Activated CD4-positive, alpha-beta T cell treated with anti-CD3 and anti-CD28 coated beads, Interleukin-2, amount 10 ng/mL, durations not matched to agents 24 days and 14 days (primary cell): ENCODE measurements at regions of chr7 and their contacts with region 1.

Region 1: DNA sequence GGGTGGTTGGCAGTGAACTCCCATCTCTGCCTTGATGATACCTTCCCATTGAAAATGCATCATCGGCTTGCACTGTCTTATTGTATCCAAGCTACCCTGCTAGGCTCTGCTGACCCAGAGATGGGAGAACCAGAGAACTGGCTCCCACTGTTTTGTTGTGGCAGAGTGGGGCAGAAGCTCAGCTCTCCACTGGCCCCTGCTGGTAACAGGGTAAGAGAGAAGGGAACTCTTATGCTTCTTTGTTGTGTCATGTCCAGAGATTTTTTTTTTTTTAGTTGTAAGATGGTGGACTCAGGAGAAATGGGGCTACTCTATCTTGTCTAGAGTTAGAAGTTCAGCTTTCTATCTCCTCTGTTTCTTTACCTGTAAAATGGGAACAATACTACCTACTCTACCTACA is 100.5 kb upstream of the SDK1 start:
- DNase-seq: peak; percentile 78
- H3K4me3 Mint-ChIP-seq: no peak overlapping the region
- H3K27ac Mint-ChIP-seq: no peak overlapping the region
- H3K4me1 Mint-ChIP-seq: no peaks in the 10 kb centered on the region
- H3K27me3 Mint-ChIP-seq: peaks cover 3% of the 10 kb centered on the region

Region 2: DNA sequence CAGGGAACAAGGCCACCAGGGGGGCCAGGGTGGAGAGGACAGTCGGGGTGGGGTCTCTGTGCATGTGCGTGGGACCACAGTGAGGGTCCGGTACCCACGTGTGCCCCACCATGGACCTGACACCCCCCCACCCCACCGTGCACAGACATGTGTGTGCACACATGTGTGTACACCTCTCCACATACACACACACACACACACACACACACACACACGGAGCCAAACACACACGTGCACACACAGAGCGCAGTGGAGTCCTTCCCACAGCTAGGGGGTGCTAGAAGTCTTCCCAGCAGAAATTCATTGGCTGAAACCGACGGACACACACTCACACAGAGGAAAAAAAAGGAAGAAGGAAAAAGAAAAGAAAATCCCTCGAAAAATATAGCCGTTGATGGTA is 313.6 kb before region 1 on chr7:
- intact Hi-C with region 1: loop called (anchors 1 kb)
- DNase-seq: peak; percentile 87
- H3K4me3 Mint-ChIP-seq: no peak overlapping the region
- H3K27ac Mint-ChIP-seq: peak overlapping the region; percentile 3
- H3K4me1 Mint-ChIP-seq: peaks cover 7% of the 10 kb centered on the region
- H3K27me3 Mint-ChIP-seq: peaks cover 1% of the 10 kb centered on the region

Region 3: DNA sequence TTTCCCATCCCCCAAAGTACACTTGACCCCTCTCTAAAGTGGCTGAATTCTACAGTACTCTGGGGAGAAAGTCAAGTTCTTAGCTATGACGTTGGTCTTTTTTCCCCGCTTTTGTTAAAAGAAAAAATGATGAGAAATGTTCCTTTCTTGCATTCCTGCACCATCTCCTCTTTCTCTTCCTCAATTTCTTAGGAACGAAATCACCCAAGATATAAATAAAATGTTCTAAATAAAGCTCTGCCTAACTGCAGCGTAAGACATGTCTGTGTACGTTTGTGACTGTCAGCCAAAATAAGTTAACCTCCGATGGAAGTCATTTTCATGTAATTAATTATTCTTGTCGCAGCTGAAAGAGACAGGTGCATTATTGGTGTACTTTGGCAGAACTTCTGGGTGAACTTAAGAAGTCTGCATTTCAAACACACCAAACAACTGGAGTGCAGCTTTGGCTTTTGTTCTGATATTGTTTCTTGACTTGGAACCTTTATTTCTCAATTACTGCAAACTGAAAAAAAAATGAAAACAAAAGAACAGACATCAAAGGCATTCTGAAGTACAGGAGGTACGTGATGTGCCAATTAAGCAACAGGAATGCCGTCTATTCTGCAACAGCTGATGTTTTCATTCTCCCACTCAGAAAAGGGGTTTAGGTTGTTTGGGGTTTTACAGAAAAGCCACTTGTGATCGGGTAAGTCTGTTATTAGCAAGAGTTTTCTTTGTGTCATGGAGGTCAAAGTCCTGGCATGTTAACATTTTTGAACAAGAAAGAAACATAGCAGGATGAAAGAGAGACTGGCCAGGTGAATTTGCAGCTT is 18.1 kb after region 1 on chr7:
- intact Hi-C with region 1: no loop called
- DNase-seq: no peak
- H3K4me3 Mint-ChIP-seq: no peak overlapping the region
- H3K27ac Mint-ChIP-seq: no peak overlapping the region
- H3K4me1 Mint-ChIP-seq: no peaks in the 10 kb centered on the region
- H3K27me3 Mint-ChIP-seq: peaks cover 28% of the 10 kb centered on the region

Region 4: GRCh38 chr7:3272691-3273181 is 72.2 kb after region 1 on chr7:
- intact Hi-C with region 1: no loop called
- DNase-seq: no peak
- H3K4me3 Mint-ChIP-seq: no peak overlapping the region
- H3K27ac Mint-ChIP-seq: no peak overlapping the region
- H3K4me1 Mint-ChIP-seq: no peaks in the 10 kb centered on the region
- H3K27me3 Mint-ChIP-seq: peaks cover 2% of the 10 kb centered on the region